CD14-positive monocyte (primary cell): ENCODE measurements at regions of chr20 and their contacts with region 1.

Region 1: DNA sequence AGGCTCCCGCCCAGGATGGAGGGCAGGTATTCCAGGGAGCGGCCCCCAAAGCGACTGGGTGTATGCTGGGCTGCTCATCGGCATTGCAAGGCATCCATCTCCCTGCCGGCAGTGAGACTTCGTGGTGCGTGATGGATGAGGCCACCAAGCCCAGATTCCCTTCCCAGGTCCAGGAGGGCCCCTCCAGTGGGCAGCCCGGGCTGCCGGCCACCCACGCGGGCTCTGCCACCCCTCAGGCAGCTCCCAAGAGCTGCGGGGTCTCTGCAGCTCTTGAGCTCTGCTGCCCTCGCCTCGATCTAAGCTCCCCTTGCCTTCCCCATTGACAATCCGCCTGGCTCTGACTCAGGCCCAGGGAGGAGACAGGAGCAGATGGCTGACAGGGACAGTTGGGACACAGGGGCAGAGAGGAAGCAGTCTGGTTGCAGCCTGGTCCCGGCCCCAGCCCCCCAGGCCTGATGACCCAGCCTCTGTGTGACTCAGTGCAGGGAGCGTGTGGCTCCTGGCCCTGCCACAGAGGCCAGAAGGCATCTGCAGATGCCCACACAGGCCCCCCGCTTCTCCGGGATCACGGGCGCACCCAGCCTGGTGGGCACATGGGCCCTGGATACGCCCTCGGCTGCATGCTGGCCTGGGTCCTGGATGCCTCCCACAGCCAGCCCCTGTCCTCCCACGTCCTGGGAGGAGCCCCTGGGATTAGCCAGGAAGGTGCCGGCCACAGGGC is 33.0 kb downstream of the SLCO4A1 start:
- DNase-seq: peak; percentile 95 to 98 (median 97)
- H3K4me3 ChIP-seq: no peak overlapping the region
- H3K4me3 Mint-ChIP-seq: peak overlapping the region; percentile 9 to 63
- H3K27ac ChIP-seq: peak overlapping the region; percentile 14 to 86
- H3K27ac Mint-ChIP-seq: peak overlapping the region; percentile 38 to 92 (median 81)
- H3K4me1 ChIP-seq: peaks cover 71 to 94% of the 10 kb centered on the region in 2 donors
- H3K4me1 Mint-ChIP-seq: peaks cover 85% of the 10 kb centered on the region
- H3K27me3 ChIP-seq: no peaks in the 10 kb centered on the region
- H3K27me3 Mint-ChIP-seq: peaks cover 1 to 7% (median 2%) of the 10 kb centered on the region in 3 donors
- CTCF ChIP-seq: no peak

Region 2: DNA sequence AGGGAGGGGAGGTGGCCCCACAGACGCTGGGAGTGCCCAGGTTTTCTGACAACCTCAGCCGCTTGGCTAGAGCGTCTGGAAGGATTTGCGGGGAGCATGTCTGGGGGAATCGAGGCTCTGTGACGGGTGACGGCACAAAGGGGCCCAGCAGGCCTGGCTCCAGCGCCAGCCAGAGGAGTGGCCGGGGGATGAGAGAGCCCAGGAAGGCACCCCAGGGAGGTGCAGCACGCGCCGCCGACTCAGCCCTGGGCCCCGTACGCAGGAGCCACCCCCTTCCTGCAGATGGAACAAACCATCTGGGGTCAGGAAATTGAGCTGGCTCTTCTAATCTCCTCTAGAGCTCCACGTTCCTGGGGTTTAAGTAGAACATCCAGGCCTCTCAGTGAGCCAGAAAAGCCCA is 38.9 kb before region 1 on chr20:
- intact Hi-C with region 1: no loop called
- DNase-seq: no peak
- H3K4me3 ChIP-seq: no peak overlapping the region
- H3K4me3 Mint-ChIP-seq: peak overlapping the region in 1 of 2 donors; percentile 30
- H3K27ac ChIP-seq: no peak overlapping the region
- H3K27ac Mint-ChIP-seq: no peak overlapping the region
- H3K4me1 ChIP-seq: peaks cover 3 to 8% of the 10 kb centered on the region in 2 donors
- H3K4me1 Mint-ChIP-seq: peaks cover 16% of the 10 kb centered on the region
- H3K27me3 ChIP-seq: peaks cover 2 to 37% of the 10 kb centered on the region in 2 donors
- H3K27me3 Mint-ChIP-seq: peaks cover 35 to 57% (median 35%) of the 10 kb centered on the region in 3 donors
- CTCF ChIP-seq: no peak

Region 3: GRCh38 chr20:62685781-62686555 is 10.7 kb after region 1 on chr20:
- intact Hi-C with region 1: loop called in 1 of 2 experiments (anchors 1 kb)
- DNase-seq: peak; percentile 88 to 95 (median 90)
- H3K4me3 ChIP-seq: peak overlapping the region in 2 of 3 experiments; percentile 12 to 66
- H3K4me3 Mint-ChIP-seq: peak overlapping the region; percentile 59 to 84
- H3K27ac ChIP-seq: peak overlapping the region; percentile 60 to 68
- H3K27ac Mint-ChIP-seq: peak overlapping the region; percentile 54 to 90 (median 64)
- H3K4me1 ChIP-seq: peaks cover 28 to 47% of the 10 kb centered on the region in 2 donors
- H3K4me1 Mint-ChIP-seq: peaks cover 46% of the 10 kb centered on the region
- H3K27me3 ChIP-seq: no peaks in the 10 kb centered on the region
- H3K27me3 Mint-ChIP-seq: peaks cover 4 to 5% (median 4%) of the 10 kb centered on the region in 3 donors
- CTCF ChIP-seq: no peak

Region 4: DNA sequence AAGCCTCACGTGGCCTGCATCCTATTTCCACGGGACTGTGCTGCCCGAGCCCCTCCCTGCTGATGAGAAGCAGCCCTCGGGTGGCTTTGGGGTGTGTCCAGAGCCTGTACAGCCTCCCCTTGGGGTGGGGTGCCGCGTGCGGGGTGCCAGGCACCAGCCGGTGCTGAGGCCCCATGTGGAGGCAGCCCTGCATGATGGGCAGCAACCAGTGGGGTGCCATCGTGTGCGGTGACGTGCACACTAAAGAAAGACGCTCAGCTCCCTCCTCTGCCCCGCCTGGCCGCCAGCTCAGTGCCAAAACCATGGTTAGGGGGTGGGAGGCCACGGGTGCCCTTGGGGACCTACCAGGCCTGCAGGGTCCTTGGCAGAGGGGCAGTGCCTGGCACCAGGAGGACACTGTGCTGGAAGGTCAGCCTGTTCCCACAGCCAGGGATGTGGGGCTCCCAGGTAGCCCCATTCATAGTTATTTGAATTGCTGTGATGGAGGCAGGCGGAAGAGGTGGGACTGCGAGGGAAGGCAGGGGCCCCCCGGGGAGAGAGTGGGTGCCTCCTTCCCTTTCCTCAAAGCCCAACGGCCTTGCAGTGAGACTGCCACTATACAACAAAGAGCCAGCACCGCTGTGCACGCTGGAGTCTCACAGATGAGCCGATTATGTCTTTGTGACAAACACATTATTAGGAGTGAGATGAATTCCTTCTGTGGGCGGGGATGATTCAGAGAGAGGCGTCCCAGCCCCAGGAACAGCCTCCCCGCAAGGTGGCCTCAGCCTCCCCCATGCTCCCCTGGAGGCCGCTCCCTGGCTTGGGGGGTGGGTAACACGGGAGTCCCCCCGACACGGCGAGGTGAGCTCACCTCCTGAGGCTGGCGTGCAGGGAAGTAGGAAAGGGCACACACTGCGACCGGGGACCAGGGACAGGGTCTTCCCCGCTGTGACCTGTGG is 59.8 kb after region 1 on chr20:
- intact Hi-C with region 1: loop called (anchors 5 kb)
- DNase-seq: peak; percentile 51 to 66 (median 64)
- H3K4me3 ChIP-seq: peak overlapping the region in 1 of 3 experiments; percentile 18
- H3K4me3 Mint-ChIP-seq: peak overlapping the region; percentile 16 to 42
- H3K27ac ChIP-seq: peak overlapping the region; percentile 27 to 67
- H3K27ac Mint-ChIP-seq: peak overlapping the region; percentile 37 to 85 (median 58)
- H3K4me1 ChIP-seq: peaks cover 62 to 90% of the 10 kb centered on the region in 2 donors
- H3K4me1 Mint-ChIP-seq: peaks cover 79% of the 10 kb centered on the region
- H3K27me3 ChIP-seq: no peaks in the 10 kb centered on the region
- H3K27me3 Mint-ChIP-seq: peaks cover 0 to 7% (median 0%) of the 10 kb centered on the region in 3 donors
- CTCF ChIP-seq: no peak

Region 5: GRCh38 chr20:62740286-62741141 is 65.2 kb after region 1 on chr20:
- intact Hi-C with region 1: loop called in 1 of 2 experiments (anchors 5 kb)
- DNase-seq: peak; percentile 92 to 99 (median 96)
- H3K4me3 ChIP-seq: peak overlapping the region in 2 of 3 experiments; percentile 10 to 72
- H3K4me3 Mint-ChIP-seq: peak overlapping the region; percentile 68 to 77
- H3K27ac ChIP-seq: peak overlapping the region; percentile 93 to 99
- H3K27ac Mint-ChIP-seq: peak overlapping the region; percentile 94 to 99 (median 97)
- H3K4me1 ChIP-seq: peaks cover 41 to 65% of the 10 kb centered on the region in 2 donors
- H3K4me1 Mint-ChIP-seq: peaks cover 57% of the 10 kb centered on the region
- H3K27me3 ChIP-seq: no peaks in the 10 kb centered on the region
- H3K27me3 Mint-ChIP-seq: peaks cover 1 to 7% (median 2%) of the 10 kb centered on the region in 3 donors
- CTCF ChIP-seq: no peak

Region 6: DNA sequence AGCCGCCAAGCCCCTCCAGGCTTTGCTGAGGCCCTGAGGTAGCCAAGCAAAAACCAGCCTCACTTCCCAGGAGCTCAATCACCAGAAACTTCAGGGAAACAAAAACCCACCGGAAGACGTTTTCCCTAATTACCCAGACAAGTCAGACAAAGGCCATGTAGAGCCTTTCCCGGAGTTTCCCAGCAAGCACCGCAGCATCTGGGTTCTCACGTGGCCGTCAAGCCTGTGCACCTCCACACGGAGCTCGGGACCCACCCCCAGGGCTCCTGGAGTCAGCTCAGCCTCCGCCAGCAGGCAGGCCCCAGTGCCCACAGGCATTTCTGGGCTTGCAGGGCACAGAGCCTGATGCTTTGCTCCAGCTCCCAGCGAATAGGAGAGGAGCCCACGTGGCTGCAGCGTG is 110.8 kb after region 1 on chr20:
- intact Hi-C with region 1: loop called in 1 of 2 experiments (anchors 2 kb)
- DNase-seq: no peak
- H3K4me3 ChIP-seq: no peak overlapping the region
- H3K4me3 Mint-ChIP-seq: no peak overlapping the region
- H3K27ac ChIP-seq: peak overlapping the region in 1 of 2 donors; percentile 92
- H3K27ac Mint-ChIP-seq: peak overlapping the region in 4 of 7 donors; percentile 19 to 84 (median 81)
- H3K4me1 ChIP-seq: peaks cover 14 to 24% of the 10 kb centered on the region in 2 donors
- H3K4me1 Mint-ChIP-seq: peaks cover 28% of the 10 kb centered on the region
- H3K27me3 ChIP-seq: no peaks in the 10 kb centered on the region
- H3K27me3 Mint-ChIP-seq: peaks cover 1 to 6% (median 4%) of the 10 kb centered on the region in 3 donors
- CTCF ChIP-seq: no peak